Heart right ventricle (tissue), 16 donors: ENCODE measurements at regions of chr20 and their contacts with region 1.

Region 1: GRCh38 chr20:47365023-47365764 is 8.7 kb upstream of the ZMYND8 start:
- DNase-seq: no peak
- ATAC-seq: no peak
- H3K4me3 ChIP-seq: no peak overlapping the region
- H3K27ac ChIP-seq: no peak overlapping the region
- H3K4me1 ChIP-seq: peaks cover 6 to 29% (median 21%) of the 10 kb centered on the region in 9 donors
- H3K27me3 ChIP-seq: no peaks in the 10 kb centered on the region
- CTCF ChIP-seq: no peak

Region 2: GRCh38 chr20:47281376-47281775 is 83.8 kb before region 1 on chr20:
- intact Hi-C with region 1: loop called in 3 of 10 experiments (anchors 5 kb)
- DNase-seq: no peak
- ATAC-seq: no peak
- H3K4me3 ChIP-seq: no peak overlapping the region
- H3K27ac ChIP-seq: no peak overlapping the region
- H3K4me1 ChIP-seq: peaks cover 6 to 18% (median 14%) of the 10 kb centered on the region in 9 donors
- H3K27me3 ChIP-seq: no peaks in the 10 kb centered on the region
- CTCF ChIP-seq: no peak

Region 3: DNA sequence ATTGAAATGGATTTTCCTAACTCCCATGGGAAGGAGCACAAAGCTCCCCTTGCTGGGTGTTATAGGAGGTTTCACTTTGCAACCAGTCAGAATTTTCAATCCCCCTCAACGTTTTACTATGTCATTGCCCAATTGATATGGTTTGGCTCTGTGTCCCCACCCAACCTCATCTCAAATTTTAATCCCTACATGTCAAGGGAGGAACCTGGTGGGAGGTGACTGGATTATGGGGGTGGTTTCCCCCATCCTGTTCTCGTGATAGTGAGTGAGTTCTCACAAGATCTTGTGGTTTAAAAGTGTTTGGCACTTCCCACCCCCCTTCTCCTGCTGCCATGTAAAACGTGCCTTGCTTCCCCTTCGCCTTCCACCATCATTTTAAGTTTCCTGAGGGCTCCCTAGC is 71.6 kb before region 1 on chr20:
- intact Hi-C with region 1: loop called in 1 of 10 experiments (anchors 5 kb)
- DNase-seq: no peak
- ATAC-seq: no peak
- H3K4me3 ChIP-seq: no peak overlapping the region
- H3K27ac ChIP-seq: peak overlapping the region in 1 of 10 donors; percentile 43
- H3K4me1 ChIP-seq: peaks cover 0 to 16% (median 7%) of the 10 kb centered on the region in 9 donors
- H3K27me3 ChIP-seq: no peaks in the 10 kb centered on the region
- CTCF ChIP-seq: no peak